Heart right ventricle (tissue), 16 donors: ENCODE measurements at regions of chr17 and their contacts with region 1.

Region 1: GRCh38 chr17:42609182-42609813 is at the starts of genes RETREG3 and TUBG1:
- DNase-seq: peak; percentile 98 to 99
- ATAC-seq: peak; percentile 96 to 99 (median 98)
- H3K4me3 ChIP-seq: peak within 1 kb of the TSS; percentile 60 to 97 (median 80)
- H3K27ac ChIP-seq: peak within 1 kb of the TSS; percentile 65 to 96 (median 91)
- H3K4me1 ChIP-seq: peaks cover 6 to 54% (median 44%) of the 10 kb centered on the region in 9 donors
- H3K27me3 ChIP-seq: no peaks in the 10 kb centered on the region
- CTCF ChIP-seq: peak in 7 of 9 donors; percentile 21 to 67 (median 35)
- total RNA-seq, gene RETREG3: 18.5 to 29.9 (median 25.2) TPM
- total RNA-seq, gene TUBG1: 28.2 to 59.8 (median 43.7) TPM

Region 2: GRCh38 chr17:42294469-42295398 is 314.6 kb before region 1 on chr17:
- intact Hi-C with region 1: no loop called
- DNase-seq: peak in 1 of 2 donors; percentile 1
- ATAC-seq: no peak
- H3K4me3 ChIP-seq: no peak overlapping the region
- H3K27ac ChIP-seq: peak overlapping the region in 1 of 10 donors; percentile 26
- H3K4me1 ChIP-seq: peaks cover 0 to 36% (median under 1%) of the 10 kb centered on the region in 9 donors
- H3K27me3 ChIP-seq: no peaks in the 10 kb centered on the region
- CTCF ChIP-seq: no peak

Region 3: DNA sequence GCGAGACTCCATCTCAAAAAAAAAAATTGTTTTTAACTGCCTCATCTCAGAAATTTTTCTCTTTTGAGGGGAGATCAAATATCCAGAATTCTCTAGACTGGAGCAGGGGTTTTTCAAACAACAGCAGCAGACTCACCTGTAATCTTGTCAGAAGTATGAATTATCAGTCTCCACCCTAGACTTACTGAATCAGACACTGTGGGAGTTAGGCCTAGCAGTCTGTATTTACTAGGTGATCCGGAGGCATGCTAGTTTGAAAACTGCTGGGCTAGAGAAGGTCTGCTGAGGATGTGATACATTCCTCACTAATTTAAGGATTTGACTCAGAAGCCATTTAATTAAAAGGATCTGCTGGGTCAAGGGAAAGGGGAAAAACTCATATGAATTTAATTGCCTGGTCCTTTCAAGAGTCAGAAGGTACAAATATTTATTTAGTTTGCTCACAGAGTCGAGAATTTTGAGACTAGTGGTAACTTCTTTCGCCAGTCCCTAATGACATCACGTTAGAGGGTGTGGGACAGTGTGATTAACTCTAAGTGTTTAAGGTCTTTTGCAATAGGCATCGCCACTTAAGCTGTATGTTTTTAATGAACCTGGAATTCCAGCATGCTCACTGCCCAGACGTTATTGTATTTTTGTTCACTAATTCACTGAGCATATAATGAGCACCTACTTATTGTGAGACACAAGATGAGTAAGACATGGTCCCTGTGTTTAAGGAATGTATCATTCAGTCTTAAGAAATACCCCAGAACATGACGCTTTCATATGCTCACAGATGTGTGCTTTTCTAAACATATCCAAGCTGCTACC is 136.4 kb before region 1 on chr17:
- intact Hi-C with region 1: no loop called
- DNase-seq: no peak
- ATAC-seq: no peak
- H3K4me3 ChIP-seq: no peak overlapping the region
- H3K27ac ChIP-seq: no peak overlapping the region
- H3K4me1 ChIP-seq: peaks cover 0 to 21% (median 0%) of the 10 kb centered on the region in 9 donors
- H3K27me3 ChIP-seq: no peaks in the 10 kb centered on the region
- CTCF ChIP-seq: no peak

Region 4: DNA sequence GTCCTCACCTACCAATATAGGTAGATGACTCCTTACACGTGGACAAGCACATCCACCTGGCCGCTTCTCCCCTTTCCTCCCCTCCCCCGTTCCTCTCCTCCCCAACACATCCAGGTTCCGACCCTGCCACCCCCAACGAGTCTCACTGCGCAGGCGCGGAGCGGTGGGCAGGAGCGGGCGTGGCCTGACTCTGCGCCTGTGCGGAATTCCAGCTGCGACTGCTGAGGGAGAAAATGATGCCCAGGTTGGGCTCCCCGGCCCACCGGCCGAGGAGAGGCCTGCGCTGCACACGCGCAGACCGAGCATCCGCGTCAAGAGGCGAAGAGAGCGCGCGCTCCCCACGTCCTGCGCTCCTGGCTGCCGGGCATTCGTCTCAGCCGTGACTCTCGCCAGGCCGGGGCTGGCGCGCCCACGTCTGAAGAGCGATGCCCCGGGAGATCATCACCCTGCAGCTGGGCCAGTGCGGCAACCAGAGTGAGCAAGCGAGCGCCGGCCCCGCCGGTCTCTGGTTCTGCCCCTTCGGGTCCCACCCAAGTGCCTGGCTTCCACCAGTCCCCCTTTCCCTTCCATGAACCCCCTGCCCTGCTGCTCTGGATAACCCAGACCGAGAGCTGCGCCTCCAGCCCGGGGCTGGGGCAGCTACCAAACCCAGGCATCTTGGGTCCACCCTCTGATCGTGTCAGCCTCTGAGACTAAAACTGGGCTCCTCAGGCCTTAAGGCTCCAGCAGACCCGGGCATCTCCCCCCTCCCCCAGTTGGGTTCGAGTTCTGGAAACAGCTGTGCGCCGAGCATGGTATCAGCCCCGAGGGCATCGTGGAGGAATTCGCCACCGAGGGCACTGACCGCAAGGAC is 50.0 kb after region 1 on chr17 and contains the start of gene TUBG2:
- intact Hi-C with region 1: loop called in 4 of 10 experiments (anchors 5 to 10 kb)
- DNase-seq: peak; percentile 87 to 92
- ATAC-seq: peak; percentile 94 to 97 (median 94)
- H3K4me3 ChIP-seq: peak within 1 kb of the TSS; percentile 23 to 88 (median 74)
- H3K27ac ChIP-seq: peak within 1 kb of the TSS in 9 of 10 donors; percentile 44 to 90 (median 80)
- H3K4me1 ChIP-seq: peaks cover 0 to 26% (median 13%) of the 10 kb centered on the region in 9 donors
- H3K27me3 ChIP-seq: peaks cover 0 to under 1% (median 0%) of the 10 kb centered on the region in 7 donors
- CTCF ChIP-seq: no peak
- total RNA-seq, gene TUBG2: 10.6 to 20.4 (median 14.7) TPM

Region 5: DNA sequence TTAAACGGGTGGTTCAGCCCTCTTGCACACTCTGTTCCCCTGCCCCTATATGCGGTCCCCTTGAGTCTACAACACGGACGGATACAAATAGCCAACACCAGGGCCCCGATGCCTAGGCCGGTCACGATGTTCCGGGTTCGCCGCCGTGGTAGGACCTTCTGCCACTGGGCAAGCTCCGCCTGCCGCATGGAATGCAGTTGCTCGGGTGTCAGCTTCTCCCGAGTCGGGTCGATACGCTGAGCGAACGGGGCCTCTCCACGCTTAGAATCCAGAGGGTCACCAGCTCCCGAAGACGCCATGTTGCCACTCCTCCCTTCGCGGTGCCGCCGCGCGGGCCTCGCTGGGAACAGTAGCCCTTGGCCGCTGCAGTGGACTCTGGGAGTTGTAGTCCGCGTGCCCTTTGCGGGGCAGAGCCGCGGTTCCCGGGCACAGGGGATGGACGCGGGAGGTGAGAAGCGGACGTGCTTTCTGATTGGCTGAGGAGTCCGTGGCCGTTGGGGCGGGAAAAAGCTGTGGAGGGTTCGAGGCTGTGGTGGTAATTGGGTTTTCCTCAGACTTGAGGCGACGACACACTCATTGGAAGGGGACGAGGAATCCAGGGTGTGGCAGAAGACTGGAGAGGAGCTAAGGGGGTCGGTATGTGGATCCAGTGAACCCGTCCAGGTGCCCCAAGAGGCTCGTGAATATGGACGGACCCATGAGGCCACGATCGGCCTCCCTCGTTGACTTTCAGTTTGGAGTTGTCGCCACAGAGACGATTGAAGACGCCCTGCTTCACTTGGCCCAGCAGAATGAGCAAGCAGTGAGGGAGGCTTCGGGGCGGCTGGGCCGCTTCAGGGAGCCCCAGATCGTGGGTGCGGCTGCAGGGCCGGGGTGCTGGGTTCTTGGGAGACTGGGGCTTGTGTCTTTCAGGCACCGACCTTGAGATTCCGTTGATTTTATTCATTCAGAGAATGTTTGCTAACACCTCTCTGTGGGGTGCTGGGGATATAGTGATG is 189.4 kb after region 1 on chr17 and contains the starts of genes CNTD1 and COA3:
- intact Hi-C with region 1: loop called in 1 of 10 experiments (anchors 10 kb)
- DNase-seq: peak; percentile 87
- ATAC-seq: peak; percentile 93 to 99 (median 98)
- H3K4me3 ChIP-seq: peak within 1 kb of the TSS; percentile 68 to 96 (median 88)
- H3K27ac ChIP-seq: peak within 1 kb of the TSS; percentile 40 to 91 (median 78)
- H3K4me1 ChIP-seq: peaks cover 0 to 23% (median 17%) of the 10 kb centered on the region in 9 donors
- H3K27me3 ChIP-seq: no peaks in the 10 kb centered on the region
- CTCF ChIP-seq: peak in 2 of 9 donors; percentile 4 to 16
- total RNA-seq, gene CNTD1: 0.11 to 0.42 (median 0.39) TPM in 3 of 10 donors, not detected in the others
- total RNA-seq, gene COA3: 56.1 to 85.7 (median 72.1) TPM